ENCODE measurements at regions of chr6 and their contacts with region 1.

Region 1: DNA sequence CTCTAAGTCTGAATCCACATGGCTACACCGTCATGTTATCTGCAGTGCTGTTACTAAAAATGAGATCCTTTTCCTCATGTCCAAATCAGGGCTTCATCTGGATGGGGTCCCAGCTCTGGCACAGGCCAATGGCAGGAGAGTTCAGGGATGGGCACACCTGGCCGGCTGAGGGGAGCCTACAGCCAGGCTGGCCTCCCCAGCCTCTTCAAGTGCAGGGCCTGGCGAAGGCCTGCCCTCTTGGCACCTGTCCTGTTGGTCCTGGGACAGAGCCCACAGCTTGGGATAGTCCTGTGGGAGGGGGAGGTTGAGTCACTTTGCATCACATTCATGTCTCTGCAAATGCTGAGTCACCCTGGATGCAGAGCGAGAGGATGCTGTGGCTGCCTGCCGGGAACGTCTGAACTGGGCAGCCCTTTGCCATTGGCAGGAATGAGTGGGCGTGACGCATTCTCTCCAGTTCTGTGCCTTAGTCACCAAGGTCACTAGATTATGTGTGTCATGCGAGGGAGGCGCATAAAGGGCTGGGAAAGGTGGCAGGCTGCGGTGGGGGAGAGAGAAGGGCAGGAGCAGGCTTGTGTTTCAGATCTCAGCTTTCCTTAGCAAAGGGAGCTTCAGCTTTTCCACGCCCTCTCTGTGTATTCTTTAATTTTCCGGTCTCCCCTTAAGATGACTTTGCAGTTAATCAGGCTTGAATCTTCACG is 223.2 kb upstream of the ECI2 start:
- DNase-seq: peak; percentile 88
- ATAC-seq: peak; percentile 95

Region 2: DNA sequence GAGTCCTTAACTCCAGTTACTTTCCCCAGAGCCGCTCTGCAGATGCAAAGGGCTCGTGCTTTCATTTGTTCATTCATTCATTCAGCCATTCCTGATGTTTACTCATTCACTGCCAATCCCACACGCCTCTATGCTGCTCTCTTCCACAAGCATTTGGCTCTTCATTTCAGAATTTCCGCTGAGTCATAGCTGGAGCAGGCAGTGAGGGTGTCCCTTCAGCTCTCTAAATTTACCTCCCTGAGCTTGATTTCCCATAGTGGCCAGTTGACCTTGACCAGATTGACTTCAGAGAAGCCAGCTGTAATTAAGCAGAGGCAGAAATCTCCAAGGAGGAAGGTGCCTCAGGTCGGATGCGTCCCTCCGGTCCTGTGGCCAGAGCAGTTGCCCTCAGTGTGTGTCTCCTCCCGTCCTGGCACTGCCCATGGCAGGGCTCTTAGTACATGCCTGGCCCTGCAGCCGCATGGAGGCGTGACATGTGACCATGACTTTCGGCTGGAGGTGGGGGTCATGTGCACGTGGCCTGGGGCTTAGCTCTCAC is 43.9 kb after region 1 on chr6:
- intact Hi-C with region 1: loop called (anchors 2 kb)
- DNase-seq: peak; percentile 68
- ATAC-seq: peak; percentile 84

Region 3: DNA sequence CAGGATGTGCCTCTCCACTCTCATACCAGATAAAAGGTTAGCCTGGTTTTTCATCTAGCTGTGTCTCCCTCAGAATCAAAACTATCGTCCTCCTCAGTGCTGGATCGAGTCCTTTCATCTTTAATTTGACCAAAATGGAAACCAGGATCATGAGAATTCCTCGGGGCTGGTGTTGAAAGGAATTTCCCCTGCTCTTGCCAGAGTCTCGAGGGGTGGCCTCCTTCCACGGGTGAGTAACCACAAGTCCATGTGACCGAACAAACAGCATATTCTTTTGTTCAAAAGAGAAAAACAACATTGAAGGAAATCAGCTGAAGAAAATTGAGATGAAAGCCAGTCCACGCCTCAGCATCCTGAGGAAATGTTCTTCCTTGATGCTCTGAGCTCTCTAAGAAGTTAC is 251.7 kb after region 1 on chr6:
- intact Hi-C with region 1: loop called (anchors 5 kb)
- DNase-seq: no peak
- ATAC-seq: peak; percentile 73

Measured in Right ventricle myocardium inferior (tissue), 1 donor.